ENCODE measurements at regions of chr21 and their contacts with region 1.

Region 1: GRCh38 chr21:22791986-22792560 is 1793.9 kb downstream of the NCAM2 start:
- DNase-seq: no peak
- ATAC-seq: no peak
- H3K4me3 ChIP-seq: no peak overlapping the region
- H3K27ac ChIP-seq: no peak overlapping the region
- H3K4me1 ChIP-seq: no peaks in the 10 kb centered on the region
- H3K27me3 ChIP-seq: no peaks in the 10 kb centered on the region
- CTCF ChIP-seq: peak; percentile 74

Region 2: DNA sequence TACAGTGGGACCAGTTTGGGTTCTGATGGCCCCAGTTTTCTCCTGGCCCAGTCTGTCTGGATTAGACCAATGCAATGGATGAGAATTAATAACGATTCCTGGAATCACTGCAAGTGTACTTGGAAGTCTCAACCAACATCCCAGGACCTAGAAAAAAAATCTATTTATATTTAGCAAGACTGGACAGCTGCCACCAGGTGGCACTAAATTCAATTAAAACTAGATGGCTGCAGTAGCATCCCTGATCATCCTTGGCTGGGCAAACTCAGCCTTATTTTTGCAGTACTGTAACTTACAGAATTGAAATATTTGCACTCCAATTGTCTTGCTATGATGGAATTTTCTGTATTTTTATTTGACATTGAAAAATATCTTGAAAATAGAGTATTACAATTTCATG is 1628.2 kb before region 1 on chr21:
- intact Hi-C with region 1: loop called in 1 of 2 experiments (anchors 10 kb)
- DNase-seq: no peak
- ATAC-seq: no peak
- H3K4me3 ChIP-seq: no peak overlapping the region
- H3K27ac ChIP-seq: no peak overlapping the region
- H3K4me1 ChIP-seq: no peaks in the 10 kb centered on the region
- H3K27me3 ChIP-seq: no peaks in the 10 kb centered on the region
- CTCF ChIP-seq: peak; percentile 47

Region 3: DNA sequence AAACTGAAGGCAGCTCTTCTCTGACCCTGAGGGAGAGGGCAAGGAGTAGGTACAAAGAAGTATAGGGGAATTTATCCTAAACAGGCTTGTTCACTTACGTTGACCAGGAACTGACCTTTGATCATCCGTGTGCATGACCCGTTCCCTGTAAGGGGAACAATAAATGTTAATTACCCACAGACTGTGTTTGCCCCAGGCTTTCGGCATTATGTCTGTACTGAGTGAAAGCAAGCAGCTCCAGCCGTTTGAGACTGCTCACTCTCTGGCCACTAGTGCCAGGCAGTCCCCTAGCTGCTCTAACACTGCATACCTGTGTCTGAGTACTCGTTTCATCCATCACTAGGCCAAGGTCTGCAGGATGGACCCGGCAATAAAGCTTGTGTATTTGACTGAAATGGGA is 428.6 kb before region 1 on chr21:
- intact Hi-C with region 1: no loop called
- DNase-seq: no peak
- ATAC-seq: no peak
- H3K4me3 ChIP-seq: no peak overlapping the region
- H3K27ac ChIP-seq: no peak overlapping the region
- H3K4me1 ChIP-seq: no peaks in the 10 kb centered on the region
- H3K27me3 ChIP-seq: no peaks in the 10 kb centered on the region
- CTCF ChIP-seq: no peak

Region 4: DNA sequence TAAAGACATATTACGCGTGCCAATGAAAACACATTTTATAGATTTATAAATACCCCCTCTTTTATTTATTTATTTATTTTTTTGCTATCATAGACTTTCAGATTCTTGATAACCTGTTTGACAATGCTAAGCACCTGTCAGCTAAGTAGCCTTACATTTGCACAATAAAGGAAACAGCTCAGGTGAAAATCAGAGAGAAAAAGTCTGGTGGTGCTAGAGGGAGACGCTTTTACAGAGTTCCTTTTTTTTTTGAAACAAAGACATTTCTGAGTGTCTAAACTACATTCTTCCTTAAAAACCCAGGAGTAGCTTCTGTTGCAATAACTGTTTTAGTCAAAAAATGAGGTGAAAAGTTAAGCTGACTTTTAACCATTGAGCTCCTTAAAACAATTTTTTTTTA is 182.3 kb before region 1 on chr21:
- intact Hi-C with region 1: no loop called
- DNase-seq: no peak
- ATAC-seq: no peak
- H3K4me3 ChIP-seq: no peak overlapping the region
- H3K27ac ChIP-seq: no peak overlapping the region
- H3K4me1 ChIP-seq: no peaks in the 10 kb centered on the region
- H3K27me3 ChIP-seq: no peaks in the 10 kb centered on the region
- CTCF ChIP-seq: no peak

Region 5: GRCh38 chr21:22855581-22855980 is 63.5 kb after region 1 on chr21:
- intact Hi-C with region 1: no loop called
- DNase-seq: no peak
- ATAC-seq: no peak
- H3K4me3 ChIP-seq: no peak overlapping the region
- H3K27ac ChIP-seq: no peak overlapping the region
- H3K4me1 ChIP-seq: no peaks in the 10 kb centered on the region
- H3K27me3 ChIP-seq: no peaks in the 10 kb centered on the region
- CTCF ChIP-seq: no peak

Region 6: DNA sequence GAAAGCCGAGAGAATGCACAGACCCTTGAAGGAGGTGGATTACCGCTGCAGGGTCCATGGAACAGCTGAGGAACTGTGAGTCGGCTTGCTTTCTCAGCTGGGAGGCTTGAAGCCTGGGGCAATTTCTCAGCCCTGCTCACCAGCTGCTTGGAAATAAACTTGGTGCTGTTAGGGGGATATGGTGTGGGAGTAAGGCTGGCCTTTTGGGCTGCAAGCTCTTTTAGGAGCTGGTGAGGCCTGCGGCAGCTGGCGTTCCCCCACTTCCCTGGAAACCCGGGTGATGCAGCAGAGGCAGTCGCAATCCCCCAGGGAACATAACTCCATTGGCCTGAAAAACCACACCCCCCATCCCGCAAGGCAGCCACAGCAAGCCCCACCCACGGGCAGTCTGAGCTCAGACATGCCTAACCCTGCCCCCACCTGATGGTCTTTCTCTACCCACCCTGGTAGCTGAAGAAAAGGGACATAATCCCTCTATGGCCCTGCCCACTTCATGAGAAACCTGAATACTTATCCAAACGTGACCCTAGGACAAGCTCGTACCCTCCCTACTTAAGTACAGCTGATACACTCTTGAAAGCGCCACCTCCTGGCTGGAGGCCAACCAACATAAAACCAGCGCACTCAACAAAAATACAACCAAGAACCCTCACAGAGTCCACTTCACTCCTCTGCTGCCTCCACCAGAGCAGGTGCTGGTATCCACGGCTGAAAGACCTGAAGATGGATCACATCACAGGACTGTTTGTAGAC is 201.9 kb after region 1 on chr21:
- intact Hi-C with region 1: no loop called
- DNase-seq: no peak
- ATAC-seq: no peak
- H3K4me3 ChIP-seq: no peak overlapping the region
- H3K27ac ChIP-seq: no peak overlapping the region
- H3K4me1 ChIP-seq: no peaks in the 10 kb centered on the region
- H3K27me3 ChIP-seq: no peaks in the 10 kb centered on the region
- CTCF ChIP-seq: no peak